CD4-positive, alpha-beta memory T cell (primary cell): ENCODE measurements at regions of chr1 and their contacts with region 1.

Region 1: DNA sequence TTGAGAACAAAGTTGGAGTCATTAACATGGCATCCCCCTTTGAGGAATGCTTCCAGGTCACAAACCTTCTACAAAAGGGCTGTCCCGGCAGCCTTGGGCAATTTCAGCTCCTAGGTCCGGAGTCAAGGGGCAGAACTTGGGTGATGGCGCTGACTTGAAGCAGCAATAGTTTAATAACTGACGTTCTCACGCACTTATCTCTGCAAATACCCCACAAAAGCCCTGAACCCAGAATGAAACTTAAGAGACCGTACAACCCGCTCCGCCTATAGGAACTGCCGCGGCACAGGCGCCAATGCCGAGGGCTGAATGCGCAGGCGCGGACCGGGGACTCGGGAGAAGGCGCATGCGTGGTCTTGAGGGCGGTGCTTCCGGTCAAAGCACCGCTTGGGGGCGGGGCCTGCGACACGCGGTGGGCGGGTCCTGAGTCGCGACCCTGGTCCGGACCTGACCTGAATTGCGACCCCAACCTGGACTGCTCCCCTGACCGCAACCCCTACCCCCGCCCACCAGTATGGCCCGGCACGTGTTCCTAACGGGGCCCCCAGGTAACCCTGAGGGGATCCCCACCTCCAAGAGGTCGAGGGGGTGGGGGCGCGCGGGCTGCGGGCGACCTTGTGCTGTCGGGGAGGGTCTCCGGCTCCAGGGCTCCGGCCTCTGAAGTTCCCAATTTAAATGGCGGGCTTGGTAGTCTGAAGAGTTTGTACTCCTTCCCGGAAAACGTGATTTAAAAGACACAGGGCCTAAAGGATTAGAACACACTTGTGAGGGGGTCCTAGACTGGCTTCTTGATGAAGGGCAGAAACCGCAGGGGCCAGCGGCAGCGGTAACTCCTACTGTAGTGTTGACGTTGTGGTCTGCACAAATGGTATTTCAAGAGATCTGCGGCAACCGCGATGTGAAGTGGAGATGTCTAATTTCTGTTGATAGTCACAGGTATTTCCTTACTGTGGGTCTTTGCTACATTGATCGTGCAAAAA is at the start of gene NTPCR:
- DNase-seq: peak; percentile 86 to 94 (median 91)
- H3K4me3 ChIP-seq: peak within 1 kb of the TSS; percentile 63 to 87
- H3K4me3 Mint-ChIP-seq: peak within 1 kb of the TSS; percentile 93 to 98 (median 97)
- H3K27ac ChIP-seq: peak within 1 kb of the TSS; percentile 58
- H3K27ac Mint-ChIP-seq: peak within 1 kb of the TSS; percentile 89 to 98 (median 97)
- H3K4me1 ChIP-seq: peaks cover 30% of the 10 kb centered on the region
- H3K4me1 Mint-ChIP-seq: peaks cover 24 to 48% (median 33%) of the 10 kb centered on the region in 4 donors
- H3K27me3 ChIP-seq: no peaks in the 10 kb centered on the region
- H3K27me3 Mint-ChIP-seq: no peaks in the 10 kb centered on the region
- total RNA-seq, gene NTPCR: 16.0 to 16.5 TPM

Region 2: DNA sequence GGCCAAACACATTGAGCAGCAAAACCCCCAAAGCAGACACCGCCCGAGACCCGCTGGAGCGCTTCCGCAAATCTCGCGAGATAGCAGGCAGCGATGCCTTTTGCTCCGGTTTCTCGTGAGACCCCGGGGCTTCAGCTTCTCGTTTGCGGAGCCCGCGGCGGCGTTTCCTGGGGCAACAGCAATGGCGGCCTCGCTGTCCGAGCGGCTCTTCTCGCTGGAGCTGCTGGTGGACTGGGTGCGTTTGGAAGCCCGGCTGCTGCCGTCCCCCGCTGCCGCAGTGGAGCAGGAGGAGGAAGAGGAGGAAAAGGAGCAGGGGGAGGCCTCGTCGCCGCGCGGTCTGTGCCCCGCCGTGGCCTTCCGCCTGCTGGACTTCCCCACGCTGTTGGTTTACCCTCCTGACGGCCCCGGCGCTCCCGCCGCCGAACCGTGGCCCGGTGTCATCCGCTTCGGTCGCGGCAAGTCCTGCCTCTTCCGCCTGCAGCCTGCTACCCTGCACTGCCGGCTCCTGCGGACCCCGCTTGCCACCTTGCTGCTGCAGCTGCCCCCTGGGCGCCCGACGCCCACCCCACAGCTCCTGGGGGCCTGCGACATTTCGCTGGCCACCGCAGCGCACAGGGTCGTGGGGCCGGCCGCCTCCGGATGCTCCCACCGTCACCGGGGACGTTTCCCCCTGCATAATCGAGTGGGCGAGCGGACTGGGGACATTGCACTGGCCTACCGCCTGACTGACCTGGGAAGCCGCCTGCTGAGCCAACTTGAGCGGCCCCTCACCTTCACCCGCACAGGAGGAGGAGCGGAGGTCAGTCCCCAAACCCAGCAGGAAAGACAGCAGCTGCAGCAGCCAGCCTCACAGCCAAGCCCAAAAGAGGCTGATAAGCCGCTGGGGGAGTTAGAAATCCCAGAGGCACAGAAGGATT is 145.0 kb before region 1 on chr1 and contains the start of gene MAP10:
- CTCF ChIA-PET with region 1: no interaction called
- POLR2A ChIA-PET with region 1: no interaction called
- intact Hi-C with region 1: loop called (anchors 2 kb)
- DNase-seq: peak; percentile 58 to 73 (median 71)
- H3K4me3 ChIP-seq: peak within 1 kb of the TSS; percentile 77 to 83
- H3K4me3 Mint-ChIP-seq: peak within 1 kb of the TSS; percentile 87 to 95 (median 89)
- H3K27ac ChIP-seq: peak within 1 kb of the TSS; percentile 48
- H3K27ac Mint-ChIP-seq: peak within 1 kb of the TSS; percentile 41 to 92 (median 87)
- H3K4me1 ChIP-seq: peaks cover 15% of the 10 kb centered on the region
- H3K4me1 Mint-ChIP-seq: peaks cover 17 to 29% (median 22%) of the 10 kb centered on the region in 4 donors
- H3K27me3 ChIP-seq: no peaks in the 10 kb centered on the region
- H3K27me3 Mint-ChIP-seq: peaks cover 0 to 1% of the 10 kb centered on the region in 2 donors
- total RNA-seq, gene MAP10: 2.7 to 3.1 TPM

Region 3: DNA sequence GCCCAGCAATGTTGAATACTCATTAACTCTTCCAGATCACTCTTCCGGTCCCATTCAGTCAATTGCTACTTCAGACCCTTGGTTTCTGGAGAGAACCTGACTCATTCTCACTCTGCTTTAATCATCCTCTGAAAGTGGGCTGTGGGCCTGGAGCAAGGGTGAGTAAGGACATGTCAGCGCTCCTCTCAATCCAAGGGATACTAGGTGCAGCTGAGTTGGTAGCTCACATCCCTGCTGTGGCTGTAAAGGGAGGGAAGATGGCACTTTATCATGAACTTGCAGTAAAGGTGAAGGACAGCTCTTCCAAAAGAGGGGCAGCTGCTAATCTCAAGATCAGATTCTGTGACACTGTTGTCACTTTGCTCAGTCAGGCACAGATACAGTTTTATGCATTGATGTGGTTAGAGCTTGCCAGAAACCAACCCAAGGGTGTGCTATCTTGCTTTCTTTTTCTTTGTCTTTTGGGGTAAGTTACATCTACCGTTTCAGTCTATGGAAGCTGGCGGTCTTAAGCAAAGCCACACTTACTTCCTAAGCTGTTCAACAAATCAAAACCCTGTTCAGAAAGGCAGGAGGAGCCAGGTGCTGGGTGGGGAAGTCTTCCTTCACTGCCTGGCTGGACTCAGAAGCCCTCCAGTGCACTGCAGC is 26.6 kb before region 1 on chr1:
- CTCF ChIA-PET with region 1: interaction called, 4 read pairs
- POLR2A ChIA-PET with region 1: interaction called, 6 read pairs
- intact Hi-C with region 1: loop called (anchors 1 kb)
- DNase-seq: peak; percentile 69 to 88 (median 81)
- H3K4me3 ChIP-seq: no peak overlapping the region
- H3K4me3 Mint-ChIP-seq: peak overlapping the region; percentile 59 to 81 (median 78)
- H3K27ac ChIP-seq: peak overlapping the region; percentile 14
- H3K27ac Mint-ChIP-seq: peak overlapping the region; percentile 86 to 96 (median 93)
- H3K4me1 ChIP-seq: peaks cover 49% of the 10 kb centered on the region
- H3K4me1 Mint-ChIP-seq: peaks cover 25 to 46% (median 38%) of the 10 kb centered on the region in 4 donors
- H3K27me3 ChIP-seq: no peaks in the 10 kb centered on the region
- H3K27me3 Mint-ChIP-seq: no peaks in the 10 kb centered on the region